ENCODE measurements at regions of chr20 and their contacts with region 1.

Region 1: GRCh38 chr20:3679749-3680700 is 1.8 kb downstream of the ADAM33 start:
- DNase-seq: no peak
- ATAC-seq: no peak
- H3K4me3 ChIP-seq: peak overlapping the region in 1 of 4 donors; percentile 57
- H3K27ac ChIP-seq: peak overlapping the region; percentile 63 to 70 (median 66)
- H3K4me1 ChIP-seq: peaks cover 0 to 13% of the 10 kb centered on the region in 2 donors
- H3K27me3 ChIP-seq: peaks cover 5 to 23% (median 9%) of the 10 kb centered on the region in 3 donors
- CTCF ChIP-seq: no peak
- POLR2A ChIP-seq: no peak

Region 2: GRCh38 chr20:3080939-3081388 is 599.1 kb before region 1 on chr20:
- in situ Hi-C with region 1: no loop called
- intact Hi-C with region 1: no loop called
- DNase-seq: peak; percentile 80 to 88
- ATAC-seq: peak; percentile 95 to 96
- H3K4me3 ChIP-seq: no peak overlapping the region
- H3K27ac ChIP-seq: peak overlapping the region; percentile 45 to 66 (median 56)
- H3K4me1 ChIP-seq: peaks cover 11% of the 10 kb centered on the region in 2 donors
- H3K27me3 ChIP-seq: peaks cover 5 to 15% (median 10%) of the 10 kb centered on the region in 3 donors
- CTCF ChIP-seq: no peak
- POLR2A ChIP-seq: no peak

Region 3: DNA sequence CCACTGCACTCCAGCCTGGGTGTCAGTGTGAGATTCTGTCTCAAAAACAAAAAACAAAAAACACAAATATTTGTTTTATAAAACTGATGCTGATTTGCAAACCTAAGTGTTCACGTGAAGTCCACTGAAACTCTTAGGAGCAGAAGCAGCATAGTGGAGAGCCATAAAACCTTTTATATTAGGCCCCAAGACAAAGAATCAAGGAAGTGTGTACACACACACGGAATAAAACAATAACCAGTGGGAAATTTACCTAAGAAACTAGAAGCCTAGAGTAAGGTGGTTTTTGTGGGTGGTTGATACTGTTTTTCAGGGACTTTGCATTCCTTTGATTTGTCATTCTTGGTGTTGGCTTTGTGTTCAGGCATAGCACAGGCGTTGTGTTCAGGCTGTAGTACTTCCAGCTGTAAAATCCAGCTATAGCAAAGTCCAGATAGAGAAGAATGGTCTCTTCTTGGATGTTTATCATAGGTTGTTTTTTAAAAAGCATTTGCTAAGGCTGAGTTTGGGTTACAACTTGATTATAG is 147.9 kb before region 1 on chr20:
- in situ Hi-C with region 1: no loop called
- intact Hi-C with region 1: no loop called
- DNase-seq: no peak
- ATAC-seq: no peak
- H3K4me3 ChIP-seq: no peak overlapping the region
- H3K27ac ChIP-seq: no peak overlapping the region
- H3K4me1 ChIP-seq: no peaks in the 10 kb centered on the region
- H3K27me3 ChIP-seq: no peaks in the 10 kb centered on the region
- CTCF ChIP-seq: no peak
- POLR2A ChIP-seq: no peak

Region 4: GRCh38 chr20:3716195-3716834 is 36.3 kb after region 1 on chr20:
- in situ Hi-C with region 1: loop called in 2 of 4 experiments (anchors 5 kb)
- intact Hi-C with region 1: loop called (anchors 1 kb)
- DNase-seq: no peak
- ATAC-seq: no peak
- H3K4me3 ChIP-seq: no peak overlapping the region
- H3K27ac ChIP-seq: no peak overlapping the region
- H3K4me1 ChIP-seq: no peaks in the 10 kb centered on the region
- H3K27me3 ChIP-seq: peaks cover 0 to 3% (median 0%) of the 10 kb centered on the region in 3 donors
- CTCF ChIP-seq: peak in 4 of 5 experiments; percentile 16 to 64 (median 48)
- POLR2A ChIP-seq: no peak